ENCODE measurements at regions of chr11 and their contacts with region 1.

Region 1: DNA sequence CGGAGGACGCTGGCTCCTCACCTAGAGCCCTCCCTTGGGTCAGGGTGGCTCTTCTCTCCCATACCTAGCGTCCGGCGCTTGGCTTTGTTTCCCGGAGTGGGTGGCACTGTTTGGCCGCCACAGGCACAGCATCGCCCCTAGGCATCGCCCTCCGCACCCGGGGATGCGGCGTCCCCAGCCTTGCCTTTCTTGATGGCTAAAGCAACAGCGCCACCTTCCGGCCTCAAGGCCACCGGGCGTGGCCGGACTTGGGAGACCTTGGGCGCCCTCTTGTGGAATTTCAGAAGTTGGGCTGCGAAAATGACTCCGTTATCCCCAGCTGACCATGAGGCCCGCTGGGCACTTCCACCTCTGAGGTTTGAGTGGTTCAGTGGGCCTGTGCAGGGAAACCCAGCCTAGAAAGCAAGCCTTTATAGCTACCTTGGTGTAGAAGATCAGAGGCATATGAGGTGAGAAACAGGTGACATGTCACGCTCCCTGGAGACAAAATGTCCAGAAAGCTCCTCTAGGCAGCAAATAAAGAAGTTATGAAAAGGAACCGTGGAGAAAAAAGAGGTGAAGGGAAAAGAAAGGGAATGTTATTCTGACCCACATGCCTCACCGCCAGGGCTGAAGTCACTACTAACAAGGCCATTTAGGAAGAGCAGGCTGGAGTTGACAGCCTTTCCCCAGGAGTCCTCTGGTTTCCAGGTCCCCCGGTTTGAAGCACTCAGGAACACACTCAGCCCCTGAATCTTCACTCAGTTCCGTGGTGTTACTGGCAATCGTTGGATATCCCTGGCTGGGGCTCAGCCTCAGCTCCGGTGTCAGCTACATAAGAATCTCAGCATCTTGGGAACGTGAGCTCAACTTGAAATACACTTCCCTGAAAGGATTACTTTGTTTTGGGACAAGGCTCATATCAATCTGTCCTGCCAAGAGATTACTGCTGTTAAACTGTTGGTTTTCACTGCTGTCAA is 54.1 kb downstream of the SNX19 start:
- DNase-seq: peak; percentile 70 to 92 (median 88)
- ATAC-seq: peak; percentile 88
- H3K4me3 ChIP-seq: no peak overlapping the region
- H3K4me3 Mint-ChIP-seq: no peak overlapping the region
- H3K27ac ChIP-seq: no peak overlapping the region
- H3K27ac Mint-ChIP-seq: no peak overlapping the region
- H3K4me1 ChIP-seq: peaks cover 8% of the 10 kb centered on the region
- H3K4me1 Mint-ChIP-seq: no peaks in the 10 kb centered on the region
- H3K27me3 ChIP-seq: no peaks in the 10 kb centered on the region
- H3K27me3 Mint-ChIP-seq: peaks cover 6% of the 10 kb centered on the region
- CTCF ChIP-seq: peak; percentile 100

Region 2: GRCh38 chr11:130213143-130213978 is 648.8 kb before region 1 on chr11:
- CTCF ChIA-PET with region 1: interaction called, 27 read pairs
- POLR2A ChIA-PET with region 1: no interaction called
- intact Hi-C with region 1: loop called in 1 of 2 experiments (anchors 1 kb)
- DNase-seq: peak; percentile 43 to 87 (median 71)
- ATAC-seq: peak; percentile 98
- H3K4me3 ChIP-seq: no peak overlapping the region
- H3K4me3 Mint-ChIP-seq: no peak overlapping the region
- H3K27ac ChIP-seq: no peak overlapping the region
- H3K27ac Mint-ChIP-seq: no peak overlapping the region
- H3K4me1 ChIP-seq: no peaks in the 10 kb centered on the region
- H3K4me1 Mint-ChIP-seq: no peaks in the 10 kb centered on the region
- H3K27me3 ChIP-seq: peaks cover 0 to 3% of the 10 kb centered on the region in 2 experiments
- H3K27me3 Mint-ChIP-seq: peaks cover 6% of the 10 kb centered on the region
- CTCF ChIP-seq: peak; percentile 97

Region 3: DNA sequence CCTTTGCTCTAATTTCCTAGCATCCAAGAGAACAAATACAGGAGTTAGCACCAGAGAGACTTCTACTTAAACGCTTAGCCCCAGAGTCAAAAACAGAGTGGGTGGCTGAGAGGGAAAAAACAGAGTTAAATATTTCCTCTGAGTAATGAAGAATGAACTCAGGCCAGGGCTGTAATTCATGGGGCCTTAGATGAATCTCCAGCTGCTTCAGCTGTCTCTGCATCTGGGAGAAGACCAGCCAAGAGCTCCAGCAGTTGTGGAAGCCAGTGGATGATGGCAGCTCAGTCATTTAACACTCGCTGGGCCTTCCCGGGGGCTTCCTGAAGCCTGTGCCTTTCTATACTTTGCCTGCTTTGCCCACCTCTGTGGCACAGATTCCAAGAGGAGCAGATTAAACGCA is 419.4 kb before region 1 on chr11:
- CTCF ChIA-PET with region 1: interaction called, 163 read pairs
- POLR2A ChIA-PET with region 1: no interaction called
- intact Hi-C with region 1: no loop called
- DNase-seq: no peak
- ATAC-seq: no peak
- H3K4me3 ChIP-seq: no peak overlapping the region
- H3K4me3 Mint-ChIP-seq: no peak overlapping the region
- H3K27ac ChIP-seq: no peak overlapping the region
- H3K27ac Mint-ChIP-seq: no peak overlapping the region
- H3K4me1 ChIP-seq: peaks cover 10% of the 10 kb centered on the region
- H3K4me1 Mint-ChIP-seq: peaks cover 17% of the 10 kb centered on the region
- H3K27me3 ChIP-seq: no peaks in the 10 kb centered on the region
- H3K27me3 Mint-ChIP-seq: peaks cover 5% of the 10 kb centered on the region
- CTCF ChIP-seq: no peak

Region 4: DNA sequence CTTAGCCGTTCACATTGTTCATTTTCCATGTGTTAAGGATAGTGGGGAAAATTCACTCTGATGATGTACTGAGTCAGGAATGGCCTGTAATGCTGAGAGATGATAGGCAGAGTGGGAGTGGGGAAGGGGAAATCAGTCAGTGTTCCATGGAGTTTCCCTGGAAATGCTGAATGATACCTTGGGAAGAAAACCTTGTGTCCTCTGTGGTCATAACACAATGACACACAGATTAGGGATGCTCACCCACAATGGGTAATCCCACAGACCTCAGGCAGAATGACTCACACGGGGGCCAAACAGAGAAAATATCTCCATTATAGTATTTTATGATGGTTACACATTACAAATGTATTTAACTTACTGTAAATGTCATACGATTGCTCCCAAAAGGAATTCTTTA is 63.9 kb before region 1 on chr11:
- CTCF ChIA-PET with region 1: no interaction called
- POLR2A ChIA-PET with region 1: no interaction called
- intact Hi-C with region 1: no loop called
- DNase-seq: no peak
- ATAC-seq: no peak
- H3K4me3 ChIP-seq: no peak overlapping the region
- H3K4me3 Mint-ChIP-seq: no peak overlapping the region
- H3K27ac ChIP-seq: no peak overlapping the region
- H3K27ac Mint-ChIP-seq: no peak overlapping the region
- H3K4me1 ChIP-seq: no peaks in the 10 kb centered on the region
- H3K4me1 Mint-ChIP-seq: no peaks in the 10 kb centered on the region
- H3K27me3 ChIP-seq: no peaks in the 10 kb centered on the region
- H3K27me3 Mint-ChIP-seq: peaks cover 2% of the 10 kb centered on the region
- CTCF ChIP-seq: no peak

Region 5: DNA sequence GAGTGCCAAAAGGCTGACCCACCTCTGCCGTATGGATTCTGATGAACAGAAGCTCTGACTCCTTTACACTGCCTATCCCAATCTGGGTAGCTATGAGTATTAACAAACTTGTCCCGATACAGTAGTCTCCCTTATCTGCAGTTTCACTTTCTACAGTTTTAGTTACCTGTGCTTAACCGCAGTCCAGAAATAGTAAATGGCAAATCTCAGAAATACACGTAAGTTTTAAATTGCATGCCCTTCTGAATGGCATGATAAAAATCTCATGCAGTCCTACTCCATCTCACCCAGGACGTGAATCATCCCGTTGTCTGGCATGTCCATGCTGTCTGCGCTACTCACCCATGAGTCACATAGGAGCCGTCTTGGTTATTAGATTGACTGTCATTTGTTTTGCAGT is 14.7 kb before region 1 on chr11:
- CTCF ChIA-PET with region 1: interaction called, 20 read pairs
- POLR2A ChIA-PET with region 1: no interaction called
- intact Hi-C with region 1: no loop called
- DNase-seq: no peak
- ATAC-seq: no peak
- H3K4me3 ChIP-seq: no peak overlapping the region
- H3K4me3 Mint-ChIP-seq: no peak overlapping the region
- H3K27ac ChIP-seq: no peak overlapping the region
- H3K27ac Mint-ChIP-seq: no peak overlapping the region
- H3K4me1 ChIP-seq: no peaks in the 10 kb centered on the region
- H3K4me1 Mint-ChIP-seq: no peaks in the 10 kb centered on the region
- H3K27me3 ChIP-seq: no peaks in the 10 kb centered on the region
- H3K27me3 Mint-ChIP-seq: peaks cover 5% of the 10 kb centered on the region
- CTCF ChIP-seq: no peak

Region 6: GRCh38 chr11:130894322-130895025 is 32.3 kb after region 1 on chr11:
- CTCF ChIA-PET with region 1: interaction called, 15 read pairs
- POLR2A ChIA-PET with region 1: no interaction called
- intact Hi-C with region 1: no loop called
- DNase-seq: peak; percentile 36 to 76 (median 62)
- ATAC-seq: peak; percentile 87
- H3K4me3 ChIP-seq: no peak overlapping the region
- H3K4me3 Mint-ChIP-seq: no peak overlapping the region
- H3K27ac ChIP-seq: no peak overlapping the region
- H3K27ac Mint-ChIP-seq: no peak overlapping the region
- H3K4me1 ChIP-seq: no peaks in the 10 kb centered on the region
- H3K4me1 Mint-ChIP-seq: peaks cover 4% of the 10 kb centered on the region
- H3K27me3 ChIP-seq: no peaks in the 10 kb centered on the region
- H3K27me3 Mint-ChIP-seq: no peaks in the 10 kb centered on the region
- CTCF ChIP-seq: peak; percentile 94

Region 7: GRCh38 chr11:130937051-130937450 is 74.9 kb after region 1 on chr11:
- CTCF ChIA-PET with region 1: no interaction called
- POLR2A ChIA-PET with region 1: no interaction called
- intact Hi-C with region 1: no loop called
- DNase-seq: no peak
- ATAC-seq: no peak
- H3K4me3 ChIP-seq: no peak overlapping the region
- H3K4me3 Mint-ChIP-seq: no peak overlapping the region
- H3K27ac ChIP-seq: no peak overlapping the region
- H3K27ac Mint-ChIP-seq: no peak overlapping the region
- H3K4me1 ChIP-seq: no peaks in the 10 kb centered on the region
- H3K4me1 Mint-ChIP-seq: no peaks in the 10 kb centered on the region
- H3K27me3 ChIP-seq: no peaks in the 10 kb centered on the region
- H3K27me3 Mint-ChIP-seq: peaks cover 4% of the 10 kb centered on the region
- CTCF ChIP-seq: no peak

Measured in CD8-positive, alpha-beta T cell (primary cell).